ENCODE measurements at regions of chr11 and their contacts with region 1.

Region 1: GRCh38 chr11:68383976-68384501 is 71.6 kb downstream of the LRP5 start:
- DNase-seq: peak in 1 of 2 experiments; percentile 61
- H3K4me3 ChIP-seq: no peak overlapping the region
- H3K27ac ChIP-seq: no peak overlapping the region
- H3K4me1 ChIP-seq: peaks cover 29% of the 10 kb centered on the region
- H3K27me3 ChIP-seq: no peaks in the 10 kb centered on the region
- CTCF ChIP-seq: peak; percentile 100

Region 2: DNA sequence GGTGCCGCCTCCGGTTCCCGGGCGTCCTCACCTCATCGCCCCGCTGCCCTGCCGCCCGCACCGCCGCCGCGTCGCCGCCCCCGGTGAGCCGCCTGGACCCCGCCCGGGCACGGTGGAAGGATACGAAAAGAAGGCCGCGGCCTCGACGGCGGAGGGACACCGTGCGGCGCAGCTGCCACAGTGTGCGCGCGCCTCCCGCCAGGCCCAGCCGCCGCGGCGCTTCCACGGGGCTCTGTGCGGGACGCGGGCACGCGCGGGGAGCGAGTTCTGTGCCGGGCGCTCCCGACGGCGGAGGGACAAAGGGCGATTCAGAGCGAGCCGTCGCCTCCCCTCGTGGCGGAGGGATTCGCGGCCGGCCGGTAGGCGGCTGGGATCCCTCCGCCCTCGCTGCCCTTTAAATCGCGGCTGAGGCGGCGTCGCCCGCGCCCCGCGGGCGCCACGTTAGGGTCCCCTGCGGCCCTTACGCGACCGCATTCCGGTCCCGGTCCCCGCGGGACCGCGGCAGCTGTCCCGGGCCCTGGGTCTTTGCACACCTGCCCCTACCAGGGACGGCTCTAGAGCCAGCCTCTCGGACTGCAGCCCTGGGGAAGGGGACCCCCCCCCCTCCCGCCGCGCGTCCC is 170.4 kb before region 1 on chr11:
- CTCF ChIA-PET with region 1: no interaction called
- POLR2A ChIA-PET with region 1: interaction called, 3 read pairs
- intact Hi-C with region 1: loop called (anchors 2 kb)
- DNase-seq: peak; percentile 72 to 83
- H3K4me3 ChIP-seq: peak overlapping the region; percentile 80
- H3K27ac ChIP-seq: peak overlapping the region; percentile 91
- H3K4me1 ChIP-seq: peaks cover 23% of the 10 kb centered on the region
- H3K27me3 ChIP-seq: no peaks in the 10 kb centered on the region
- CTCF ChIP-seq: peak; percentile 14; the same call in 1 of the 2 replicates

Region 3: GRCh38 chr11:68271781-68272608 is 112.0 kb before region 1 on chr11 and contains the start of gene C11orf24:
- CTCF ChIA-PET with region 1: interaction called, 4 read pairs
- POLR2A ChIA-PET with region 1: no interaction called
- intact Hi-C with region 1: loop called (anchors 1 kb)
- DNase-seq: peak; percentile 91 to 98
- H3K4me3 ChIP-seq: peak within 1 kb of the TSS; percentile 77
- H3K27ac ChIP-seq: peak within 1 kb of the TSS; percentile 63
- H3K4me1 ChIP-seq: peaks cover 13% of the 10 kb centered on the region
- H3K27me3 ChIP-seq: no peaks in the 10 kb centered on the region
- CTCF ChIP-seq: no peak
- total RNA-seq, gene C11orf24: 27.2 and 37.7 TPM in 2 replicates

Region 4: GRCh38 chr11:68313574-68314202 is 70.4 kb before region 1 on chr11:
- CTCF ChIA-PET with region 1: interaction called, 3 read pairs
- POLR2A ChIA-PET with region 1: interaction called, 3 read pairs
- intact Hi-C with region 1: loop called (anchors 1 kb)
- DNase-seq: no peak
- H3K4me3 ChIP-seq: peak overlapping the region; percentile 89
- H3K27ac ChIP-seq: peak overlapping the region; percentile 75
- H3K4me1 ChIP-seq: peaks cover 39% of the 10 kb centered on the region
- H3K27me3 ChIP-seq: no peaks in the 10 kb centered on the region
- CTCF ChIP-seq: no peak

Region 5: GRCh38 chr11:68354148-68354872 is 29.7 kb before region 1 on chr11:
- CTCF ChIA-PET with region 1: no interaction called
- POLR2A ChIA-PET with region 1: no interaction called
- intact Hi-C with region 1: loop called (anchors 1 kb)
- DNase-seq: peak; percentile 91 to 96
- H3K4me3 ChIP-seq: peak overlapping the region; percentile 5; the same call in 1 of the 2 replicates
- H3K27ac ChIP-seq: peak overlapping the region; percentile 64
- H3K4me1 ChIP-seq: peaks cover 33% of the 10 kb centered on the region
- H3K27me3 ChIP-seq: no peaks in the 10 kb centered on the region
- CTCF ChIP-seq: no peak

Measured in PC-9 (cell line).